ENCODE measurements at regions of chr3 and their contacts with region 1.

Region 1: GRCh38 chr3:9932843-9933560 is 632 bp upstream of the CRELD1 start:
- DNase-seq: peak; percentile 73 to 92 (median 86)
- ATAC-seq: peak; percentile 64 to 76 (median 74)
- H3K4me3 ChIP-seq: peak overlapping the region; percentile 62 to 77
- H3K4me3 Mint-ChIP-seq: peak overlapping the region; percentile 89 to 98 (median 94)
- H3K27ac ChIP-seq: peak overlapping the region; percentile 90
- H3K27ac Mint-ChIP-seq: peak overlapping the region; percentile 96 to 98
- H3K4me1 ChIP-seq: peaks cover 15 to 40% of the 10 kb centered on the region in 2 experiments
- H3K4me1 Mint-ChIP-seq: peaks cover 36 to 47% (median 36%) of the 10 kb centered on the region in 3 donors
- H3K27me3 ChIP-seq: no peaks in the 10 kb centered on the region
- H3K27me3 Mint-ChIP-seq: no peaks in the 10 kb centered on the region

Region 2: GRCh38 chr3:9890249-9891071 is 42.5 kb before region 1 on chr3 and contains the start of gene JAGN1:
- CTCF ChIA-PET with region 1: interaction called, 5 to 6 read pairs
- POLR2A ChIA-PET with region 1: interaction called, 8 to 14 read pairs
- DNase-seq: peak; percentile 78 to 96 (median 88)
- ATAC-seq: peak; percentile 87 to 93 (median 90)
- H3K4me3 ChIP-seq: peak within 1 kb of the TSS; percentile 86 to 100
- H3K4me3 Mint-ChIP-seq: peak within 1 kb of the TSS; percentile 94 to 96 (median 96)
- H3K27ac ChIP-seq: peak within 1 kb of the TSS; percentile 100
- H3K27ac Mint-ChIP-seq: peak within 1 kb of the TSS; percentile 95 to 98
- H3K4me1 ChIP-seq: peaks cover 8 to 20% of the 10 kb centered on the region in 2 experiments
- H3K4me1 Mint-ChIP-seq: peaks cover 37 to 43% (median 40%) of the 10 kb centered on the region in 3 donors
- H3K27me3 ChIP-seq: no peaks in the 10 kb centered on the region
- H3K27me3 Mint-ChIP-seq: no peaks in the 10 kb centered on the region
- total RNA-seq, gene JAGN1: 16.9 to 28.6 (median 23.7) TPM

Region 3: DNA sequence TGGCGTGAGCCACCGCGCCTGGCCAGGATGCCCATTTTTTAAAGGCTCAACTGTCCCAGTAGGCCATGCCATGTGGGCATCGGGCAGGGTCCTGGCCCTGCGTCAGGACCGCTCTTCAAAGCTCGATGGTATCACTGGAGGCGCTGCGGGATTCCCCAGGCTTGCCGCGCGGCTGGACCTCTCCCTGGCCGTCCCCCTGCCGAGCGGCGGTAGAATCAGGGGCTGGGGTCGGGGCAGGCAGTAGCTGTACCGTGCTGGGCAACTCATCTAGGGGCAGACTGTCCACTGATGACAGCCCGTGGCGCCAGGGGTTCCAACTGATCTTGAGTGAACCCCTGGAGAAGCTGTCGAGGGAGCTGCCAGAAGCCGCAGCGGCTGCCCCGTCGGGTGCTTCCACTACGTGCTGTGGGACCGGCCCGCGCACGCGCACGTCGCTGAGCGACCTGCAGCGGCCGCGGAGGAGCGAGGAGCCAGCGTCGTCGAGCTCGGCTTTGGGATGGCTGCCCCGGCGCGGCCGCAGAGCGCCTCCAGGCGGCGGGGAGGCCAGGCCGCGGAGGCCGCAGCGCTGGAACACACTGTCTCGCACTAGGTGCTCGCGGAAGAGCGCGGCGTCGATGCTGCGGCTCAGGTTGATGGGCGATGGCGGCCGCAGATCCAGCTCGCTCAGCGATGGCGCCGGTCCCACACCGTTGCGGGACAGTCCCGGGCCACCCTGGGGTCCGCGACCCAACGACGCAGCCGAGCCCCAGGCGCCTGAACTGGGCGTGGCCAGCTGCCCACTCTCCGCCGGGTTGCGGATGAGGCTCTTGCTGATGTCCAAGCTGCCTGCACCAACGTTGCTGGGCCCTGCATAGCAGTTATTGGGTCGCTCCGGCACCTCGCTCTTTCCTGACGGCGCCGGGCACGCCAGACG is 13.4 kb after region 1 on chr3:
- CTCF ChIA-PET with region 1: interaction called, 8 to 33 read pairs
- POLR2A ChIA-PET with region 1: interaction called in 1 of 2 experiments, 7 read pairs
- DNase-seq: peak; percentile 53 to 89 (median 76)
- ATAC-seq: peak; percentile 87 to 92 (median 89)
- H3K4me3 ChIP-seq: peak overlapping the region; percentile 40 to 64
- H3K4me3 Mint-ChIP-seq: peak overlapping the region; percentile 73 to 81 (median 77)
- H3K27ac ChIP-seq: peak overlapping the region; percentile 34
- H3K27ac Mint-ChIP-seq: peak overlapping the region; percentile 75 to 89
- H3K4me1 ChIP-seq: peaks cover 6 to 16% of the 10 kb centered on the region in 2 experiments
- H3K4me1 Mint-ChIP-seq: peaks cover 9 to 12% (median 11%) of the 10 kb centered on the region in 3 donors
- H3K27me3 ChIP-seq: no peaks in the 10 kb centered on the region
- H3K27me3 Mint-ChIP-seq: no peaks in the 10 kb centered on the region

Region 4: GRCh38 chr3:9951962-9952805 is 19.2 kb after region 1 on chr3 and contains the start of gene PRRT3:
- CTCF ChIA-PET with region 1: interaction called, 7 to 21 read pairs
- POLR2A ChIA-PET with region 1: interaction called in 1 of 2 experiments, 5 read pairs
- DNase-seq: peak; percentile 16 to 67 (median 53)
- ATAC-seq: peak; percentile 90 to 92 (median 92)
- H3K4me3 ChIP-seq: peak within 1 kb of the TSS; percentile 52 to 72
- H3K4me3 Mint-ChIP-seq: peak within 1 kb of the TSS; percentile 79 to 90 (median 85)
- H3K27ac ChIP-seq: no peak within 1 kb of the TSS
- H3K27ac Mint-ChIP-seq: peak within 1 kb of the TSS; percentile 69 to 76
- H3K4me1 ChIP-seq: peaks cover 8 to 15% of the 10 kb centered on the region in 2 experiments
- H3K4me1 Mint-ChIP-seq: peaks cover 15 to 24% (median 21%) of the 10 kb centered on the region in 3 donors
- H3K27me3 ChIP-seq: peaks cover 0 to 4% of the 10 kb centered on the region in 2 experiments
- H3K27me3 Mint-ChIP-seq: no peaks in the 10 kb centered on the region
- total RNA-seq, gene PRRT3: 6.6 to 10.5 (median 9.2) TPM

Region 5: GRCh38 chr3:9986237-9986725 is 53.3 kb after region 1 on chr3:
- CTCF ChIA-PET with region 1: interaction called, 7 to 11 read pairs
- POLR2A ChIA-PET with region 1: interaction called in 1 of 2 experiments, 7 read pairs
- DNase-seq: peak in 1 of 35 experiments; percentile 11
- ATAC-seq: peak; percentile 54 to 63 (median 60)
- H3K4me3 ChIP-seq: peak overlapping the region; percentile 96 to 98
- H3K4me3 Mint-ChIP-seq: peak overlapping the region; percentile 95 to 97 (median 96)
- H3K27ac ChIP-seq: peak overlapping the region; percentile 87
- H3K27ac Mint-ChIP-seq: peak overlapping the region; percentile 92 to 95
- H3K4me1 ChIP-seq: peaks cover 19 to 29% of the 10 kb centered on the region in 2 experiments
- H3K4me1 Mint-ChIP-seq: peaks cover 28 to 45% (median 30%) of the 10 kb centered on the region in 3 donors
- H3K27me3 ChIP-seq: no peaks in the 10 kb centered on the region
- H3K27me3 Mint-ChIP-seq: no peaks in the 10 kb centered on the region

Region 6: DNA sequence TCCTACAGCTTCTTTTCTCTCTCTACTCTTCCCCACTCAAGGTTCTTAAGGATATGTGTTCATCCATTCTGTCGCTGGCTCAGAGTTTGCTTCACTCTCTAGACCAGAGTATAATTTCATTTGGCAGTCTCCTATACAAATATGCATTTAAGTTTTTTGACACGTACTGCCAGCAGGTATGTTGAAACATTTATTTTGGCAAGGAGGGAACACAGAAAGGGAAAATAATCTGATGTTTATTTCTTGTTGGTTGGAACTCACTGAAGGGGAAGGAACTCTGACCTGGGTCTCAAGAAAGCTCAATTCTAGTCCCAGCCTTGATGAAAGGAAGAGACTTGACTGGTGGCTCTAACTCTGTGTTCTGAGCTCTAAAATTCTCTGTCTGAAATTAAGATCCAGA is 114.9 kb after region 1 on chr3:
- CTCF ChIA-PET with region 1: no interaction called
- POLR2A ChIA-PET with region 1: interaction called in 1 of 2 experiments, 10 read pairs
- DNase-seq: no peak
- ATAC-seq: no peak
- H3K4me3 ChIP-seq: no peak overlapping the region
- H3K4me3 Mint-ChIP-seq: no peak overlapping the region
- H3K27ac ChIP-seq: no peak overlapping the region
- H3K27ac Mint-ChIP-seq: no peak overlapping the region
- H3K4me1 ChIP-seq: no peaks in the 10 kb centered on the region
- H3K4me1 Mint-ChIP-seq: no peaks in the 10 kb centered on the region
- H3K27me3 ChIP-seq: no peaks in the 10 kb centered on the region
- H3K27me3 Mint-ChIP-seq: peaks cover 0 to 1% of the 10 kb centered on the region in 2 donors

Region 7: GRCh38 chr3:10286596-10287330 is 353.8 kb after region 1 on chr3:
- CTCF ChIA-PET with region 1: interaction called in 1 of 2 experiments, 16 read pairs
- POLR2A ChIA-PET with region 1: no interaction called
- DNase-seq: peak in 19 of 35 experiments; percentile 7 to 67 (median 28)
- ATAC-seq: peak in 1 of 4 experiments; percentile 52
- H3K4me3 ChIP-seq: no peak overlapping the region
- H3K4me3 Mint-ChIP-seq: no peak overlapping the region
- H3K27ac ChIP-seq: no peak overlapping the region
- H3K27ac Mint-ChIP-seq: peak overlapping the region in 1 of 2 donors; percentile 65
- H3K4me1 ChIP-seq: peaks cover 3 to 18% of the 10 kb centered on the region in 2 experiments
- H3K4me1 Mint-ChIP-seq: peaks cover 22 to 36% (median 25%) of the 10 kb centered on the region in 3 donors
- H3K27me3 ChIP-seq: no peaks in the 10 kb centered on the region
- H3K27me3 Mint-ChIP-seq: no peaks in the 10 kb centered on the region